ENCODE measurements at regions of chr2 and their contacts with region 1.

Region 1: DNA sequence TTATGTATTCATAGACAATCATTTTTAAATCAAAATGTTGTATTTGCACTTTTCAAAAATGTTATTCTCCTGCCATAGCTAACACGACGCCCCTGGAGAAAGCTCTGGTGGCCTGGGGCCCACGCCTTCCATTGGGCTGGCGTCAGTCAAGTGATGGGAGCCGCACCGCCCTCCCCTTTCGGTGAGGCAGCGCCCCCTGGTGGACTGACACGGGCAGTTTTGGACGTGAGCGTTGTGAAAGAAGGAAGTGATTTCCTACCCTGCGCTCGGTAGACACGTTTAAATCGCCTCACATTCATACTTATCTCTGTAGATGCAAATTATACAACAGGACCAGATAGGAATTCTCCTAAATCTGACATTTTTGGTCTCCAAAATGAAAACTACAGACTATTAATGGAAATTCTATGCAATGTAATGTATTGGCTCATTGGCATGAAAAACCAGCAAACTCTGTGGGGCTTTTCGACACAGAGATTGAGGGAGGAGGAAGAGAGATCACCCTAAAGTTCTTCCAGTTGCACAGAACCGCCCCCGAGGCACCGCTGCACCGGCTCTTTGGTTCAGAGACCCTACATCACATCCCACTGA is 326.2 kb upstream of the SOX11 start:
- DNase-seq: peak; percentile 53 to 72
- ATAC-seq: peak in 3 of 4 donors; percentile 67 to 85 (median 82)
- H3K4me3 ChIP-seq: no peak overlapping the region
- H3K27ac ChIP-seq: no peak overlapping the region
- H3K4me1 ChIP-seq: no peaks in the 10 kb centered on the region
- H3K27me3 ChIP-seq: no peaks in the 10 kb centered on the region
- CTCF ChIP-seq: peak; percentile 86

Region 2: DNA sequence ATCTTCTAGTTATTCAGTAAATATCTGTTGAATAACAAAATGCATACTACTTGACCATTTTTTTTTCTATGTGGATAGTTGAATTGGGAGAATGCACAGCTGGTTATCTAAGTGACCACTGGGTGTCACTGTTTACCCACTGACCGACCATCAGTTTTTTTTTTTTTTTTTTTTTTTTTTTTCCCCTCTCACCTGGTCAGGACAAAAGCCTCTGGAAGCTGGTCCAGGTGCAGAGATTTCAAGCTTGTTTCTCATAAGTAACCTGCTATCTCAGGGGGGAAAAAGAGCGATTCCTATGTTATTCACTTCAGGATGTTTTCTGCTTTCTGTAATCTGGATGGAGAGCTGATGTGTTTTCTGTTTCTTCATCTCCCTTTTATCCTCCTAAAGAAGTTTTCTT is 1406.6 kb before region 1 on chr2:
- intact Hi-C with region 1: loop called in 1 of 2 experiments (anchors 10 kb)
- DNase-seq: no peak
- ATAC-seq: no peak
- H3K4me3 ChIP-seq: no peak overlapping the region
- H3K27ac ChIP-seq: no peak overlapping the region
- H3K4me1 ChIP-seq: no peaks in the 10 kb centered on the region
- H3K27me3 ChIP-seq: no peaks in the 10 kb centered on the region
- CTCF ChIP-seq: peak; percentile 66

Region 3: GRCh38 chr2:4992226-4992625 is 373.7 kb before region 1 on chr2:
- intact Hi-C with region 1: loop called (anchors 2 to 5 kb)
- DNase-seq: no peak
- ATAC-seq: peak in 3 of 4 donors; percentile 43 to 78 (median 61)
- H3K4me3 ChIP-seq: no peak overlapping the region
- H3K27ac ChIP-seq: no peak overlapping the region
- H3K4me1 ChIP-seq: no peaks in the 10 kb centered on the region
- H3K27me3 ChIP-seq: no peaks in the 10 kb centered on the region
- CTCF ChIP-seq: peak; percentile 47

Region 4: GRCh38 chr2:5691975-5692529 is 326.1 kb after region 1 on chr2 and contains the start of gene SOX11:
- intact Hi-C with region 1: loop called in 1 of 2 experiments (anchors 10 kb)
- DNase-seq: peak in 1 of 2 donors; percentile 44
- ATAC-seq: peak in 2 of 4 donors; percentile 32 to 63
- H3K4me3 ChIP-seq: peak within 1 kb of the TSS; percentile 52
- H3K27ac ChIP-seq: no peak within 1 kb of the TSS
- H3K4me1 ChIP-seq: peaks cover 7% of the 10 kb centered on the region
- H3K27me3 ChIP-seq: peaks cover 0 to 95% (median 43%) of the 10 kb centered on the region in 3 donors
- CTCF ChIP-seq: no peak
- total RNA-seq, gene SOX11: 0.02 to 0.43 (median 0.05) TPM